ENCODE measurements at regions of chr3 and their contacts with region 1.

Region 1: DNA sequence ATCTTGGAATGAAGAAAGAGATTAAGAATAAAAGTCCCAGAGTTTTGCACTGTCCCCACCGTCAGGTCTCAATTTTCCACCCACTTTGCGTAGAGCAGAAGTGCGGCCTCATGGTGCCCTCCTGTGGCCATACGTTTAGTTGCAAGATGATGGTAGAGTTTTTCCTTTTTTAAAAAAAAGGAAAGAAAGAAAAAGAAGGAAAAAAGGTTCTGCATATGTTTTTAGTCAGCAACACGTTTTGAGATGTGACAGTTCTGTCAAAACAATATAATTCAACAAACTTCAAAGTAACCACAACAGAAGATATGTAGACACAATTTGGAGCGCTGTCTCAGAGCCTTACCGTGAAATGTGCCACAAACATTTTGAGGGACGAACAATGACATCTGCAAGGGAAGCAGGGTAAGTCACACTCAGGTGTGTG is 24.6 kb downstream of the EBLN2 start:
- DNase-seq: peak; percentile 44
- H3K4me3 ChIP-seq: no peak overlapping the region
- H3K27ac ChIP-seq: no peak overlapping the region
- H3K4me1 ChIP-seq: no peaks in the 10 kb centered on the region
- H3K27me3 ChIP-seq: no peaks in the 10 kb centered on the region
- CTCF ChIP-seq: peak; percentile 55 to 64
- POLR2A ChIP-seq: no peak

Region 2: DNA sequence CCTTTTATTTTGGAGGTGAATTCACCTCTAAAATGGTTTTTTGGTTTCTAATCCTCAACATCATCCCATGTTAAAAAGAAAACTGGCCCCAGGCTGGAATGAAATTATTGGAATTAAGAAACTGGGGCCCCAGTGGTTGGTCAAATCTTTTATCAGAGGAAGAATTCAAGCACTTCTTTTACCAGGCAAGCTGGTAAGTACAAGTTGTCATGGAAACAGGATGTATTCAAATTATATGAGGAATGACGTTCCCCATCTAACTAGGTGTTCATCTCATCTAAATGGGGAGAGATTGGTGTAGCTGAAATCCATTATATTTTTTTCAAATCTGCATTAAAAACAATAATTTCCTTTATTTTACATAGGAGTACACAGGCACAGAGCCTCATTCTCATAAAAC is 1351.2 kb before region 1 on chr3:
- CTCF ChIA-PET with region 1: no interaction called
- POLR2A ChIA-PET with region 1: no interaction called
- dilution Hi-C with region 1: no loop called
- intact Hi-C with region 1: loop called (anchors 5 kb)
- DNase-seq: no peak
- H3K4me3 ChIP-seq: no peak overlapping the region
- H3K27ac ChIP-seq: no peak overlapping the region
- H3K4me1 ChIP-seq: no peaks in the 10 kb centered on the region
- H3K27me3 ChIP-seq: peaks cover 6 to 31% of the 10 kb centered on the region in 2 experiments
- CTCF ChIP-seq: no peak
- POLR2A ChIP-seq: no peak

Region 3: GRCh38 chr3:73049319-73049718 is 36.8 kb before region 1 on chr3:
- CTCF ChIA-PET with region 1: no interaction called
- POLR2A ChIA-PET with region 1: no interaction called
- dilution Hi-C with region 1: no loop called
- intact Hi-C with region 1: no loop called
- DNase-seq: no peak
- H3K4me3 ChIP-seq: no peak overlapping the region
- H3K27ac ChIP-seq: no peak overlapping the region
- H3K4me1 ChIP-seq: peaks cover 8% of the 10 kb centered on the region
- H3K27me3 ChIP-seq: no peaks in the 10 kb centered on the region
- CTCF ChIP-seq: no peak
- POLR2A ChIP-seq: no peak

Measured in endothelial cell of umbilical vein (primary cell).